ENCODE measurements at regions of chr5 and their contacts with region 1.

Region 1: GRCh38 chr5:32585446-32586275 is at the start of gene SUB1:
- DNase-seq: peak; percentile 91
- ATAC-seq: peak; percentile 89
- H3K4me3 ChIP-seq: peak within 1 kb of the TSS; percentile 87
- H3K27ac ChIP-seq: peak within 1 kb of the TSS; percentile 85
- H3K4me1 ChIP-seq: peaks cover 16% of the 10 kb centered on the region
- H3K27me3 ChIP-seq: no peaks in the 10 kb centered on the region
- CTCF ChIP-seq: no peak
- total RNA-seq, gene SUB1: 185 and 189 TPM in 2 replicates

Region 2: DNA sequence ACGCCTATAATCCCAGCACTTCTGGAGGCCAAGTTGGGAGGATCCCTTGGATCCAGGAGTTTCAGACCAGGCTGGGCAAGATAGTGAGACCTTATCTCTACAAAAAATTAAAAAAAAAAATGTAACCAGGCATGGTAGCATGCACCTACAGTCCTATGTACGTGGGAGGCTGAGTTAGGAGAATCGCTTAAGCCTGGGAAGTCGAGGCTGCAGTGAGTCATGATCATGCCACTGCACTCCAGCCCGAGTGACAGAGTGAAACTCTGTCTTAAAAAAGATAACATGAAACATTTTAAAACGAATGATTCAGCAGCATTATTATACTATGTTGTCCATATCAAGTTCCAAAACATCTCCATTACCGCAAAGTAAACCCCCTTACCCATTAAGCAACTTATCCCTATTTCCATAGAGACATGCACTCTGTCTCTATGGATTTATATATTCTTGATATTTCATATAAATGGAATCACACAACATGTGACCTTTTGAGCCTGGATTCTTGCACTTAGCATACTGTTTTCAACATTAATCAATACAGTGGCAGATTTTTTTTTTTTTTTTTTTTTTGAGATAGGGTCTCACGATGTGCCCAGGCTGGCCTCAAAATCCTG is 216.0 kb before region 1 on chr5:
- CTCF ChIA-PET with region 1: no interaction called
- POLR2A ChIA-PET with region 1: no interaction called
- intact Hi-C with region 1: no loop called
- DNase-seq: no peak
- ATAC-seq: no peak
- H3K4me3 ChIP-seq: no peak overlapping the region
- H3K27ac ChIP-seq: no peak overlapping the region
- H3K4me1 ChIP-seq: no peaks in the 10 kb centered on the region
- H3K27me3 ChIP-seq: no peaks in the 10 kb centered on the region
- CTCF ChIP-seq: no peak

Region 3: DNA sequence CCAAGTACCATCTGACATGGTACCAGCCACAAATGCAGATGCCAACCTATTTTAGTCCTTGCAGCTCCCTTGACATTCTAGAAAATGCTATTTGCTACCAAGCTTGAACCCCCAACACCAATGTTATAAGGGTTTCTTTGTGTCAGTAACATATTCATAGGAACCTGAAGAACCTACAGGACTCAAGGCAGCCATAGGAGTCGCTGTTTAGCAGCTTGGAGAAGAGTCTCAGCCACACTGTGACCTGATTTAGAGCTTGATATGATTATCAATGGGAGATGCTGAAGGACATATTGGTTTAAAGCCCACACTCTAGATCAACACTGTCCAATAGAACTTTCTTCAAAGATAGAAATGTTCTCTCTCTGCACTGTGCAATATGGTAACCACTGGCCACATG is 134.7 kb before region 1 on chr5:
- CTCF ChIA-PET with region 1: no interaction called
- POLR2A ChIA-PET with region 1: no interaction called
- intact Hi-C with region 1: no loop called
- DNase-seq: peak; percentile 15
- ATAC-seq: no peak
- H3K4me3 ChIP-seq: no peak overlapping the region
- H3K27ac ChIP-seq: no peak overlapping the region
- H3K4me1 ChIP-seq: no peaks in the 10 kb centered on the region
- H3K27me3 ChIP-seq: no peaks in the 10 kb centered on the region
- CTCF ChIP-seq: peak; percentile 55

Region 4: DNA sequence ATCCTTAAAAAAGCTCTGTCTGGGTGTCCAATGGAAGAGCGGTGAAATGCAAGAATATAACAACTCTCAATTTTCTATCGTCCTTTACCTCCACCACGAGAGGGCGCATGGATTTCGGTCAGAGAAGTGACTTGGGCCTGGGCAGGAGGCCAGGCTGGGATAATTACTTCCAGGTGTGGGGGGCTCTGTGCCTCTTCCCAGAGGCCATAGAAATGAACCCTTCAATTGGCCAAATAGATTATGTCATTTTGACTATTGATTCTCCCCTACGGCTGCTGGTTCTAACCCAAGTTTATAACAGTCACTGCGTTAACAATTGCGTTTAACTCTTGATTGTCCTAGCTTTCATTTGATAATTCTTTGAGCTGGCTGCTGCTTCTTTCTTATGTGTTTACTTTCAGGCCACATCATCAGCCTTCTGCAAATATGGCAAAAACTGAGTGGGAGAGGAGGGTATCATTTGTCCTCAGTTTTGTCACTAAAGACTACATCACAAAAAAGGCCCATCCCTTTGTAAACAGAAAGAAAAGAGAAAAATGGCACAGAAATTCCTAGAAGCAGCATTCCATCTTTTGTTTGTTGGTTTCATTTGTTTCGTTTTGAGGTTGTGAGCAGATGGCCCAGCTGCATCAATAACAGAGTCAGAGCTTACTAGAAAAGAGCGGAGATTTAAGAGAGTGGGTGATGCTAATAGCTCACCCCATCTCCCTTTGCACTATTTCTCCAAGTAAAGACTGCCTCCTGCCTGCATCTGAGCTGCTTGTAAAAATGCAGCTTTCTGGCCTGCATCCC is 95.7 kb before region 1 on chr5:
- CTCF ChIA-PET with region 1: interaction called, 152 read pairs
- POLR2A ChIA-PET with region 1: interaction called, 23 read pairs
- intact Hi-C with region 1: loop called (anchors 1 kb)
- DNase-seq: peak; percentile 86
- ATAC-seq: peak; percentile 88
- H3K4me3 ChIP-seq: peak overlapping the region; percentile 9; the same call in 1 of the 2 replicates
- H3K27ac ChIP-seq: peak overlapping the region; percentile 53
- H3K4me1 ChIP-seq: peaks cover 14% of the 10 kb centered on the region
- H3K27me3 ChIP-seq: no peaks in the 10 kb centered on the region
- CTCF ChIP-seq: peak; percentile 91

Region 5: GRCh38 chr5:32504989-32505596 is 80.6 kb before region 1 on chr5:
- CTCF ChIA-PET with region 1: interaction called, 6 read pairs
- POLR2A ChIA-PET with region 1: no interaction called
- intact Hi-C with region 1: loop called (anchors 5 kb)
- DNase-seq: no peak
- ATAC-seq: no peak
- H3K4me3 ChIP-seq: no peak overlapping the region
- H3K27ac ChIP-seq: no peak overlapping the region; the same call in 1 of the 2 replicates
- H3K4me1 ChIP-seq: peaks cover 45% of the 10 kb centered on the region
- H3K27me3 ChIP-seq: no peaks in the 10 kb centered on the region
- CTCF ChIP-seq: no peak

Region 6: GRCh38 chr5:32542216-32543059 is 43.2 kb before region 1 on chr5:
- CTCF ChIA-PET with region 1: no interaction called
- POLR2A ChIA-PET with region 1: no interaction called
- intact Hi-C with region 1: no loop called
- DNase-seq: peak; percentile 76
- ATAC-seq: peak; percentile 87
- H3K4me3 ChIP-seq: no peak overlapping the region
- H3K27ac ChIP-seq: peak overlapping the region; percentile 25; the same call in 1 of the 2 replicates
- H3K4me1 ChIP-seq: peaks cover 8% of the 10 kb centered on the region; the same call in 1 of the 2 replicates
- H3K27me3 ChIP-seq: no peaks in the 10 kb centered on the region
- CTCF ChIP-seq: no peak

Region 7: GRCh38 chr5:32613050-32613672 is 27.5 kb after region 1 on chr5:
- CTCF ChIA-PET with region 1: interaction called, 5 read pairs
- POLR2A ChIA-PET with region 1: no interaction called
- intact Hi-C with region 1: loop called (anchors 2 kb)
- DNase-seq: peak; percentile 87
- ATAC-seq: peak; percentile 81
- H3K4me3 ChIP-seq: no peak overlapping the region
- H3K27ac ChIP-seq: no peak overlapping the region
- H3K4me1 ChIP-seq: no peaks in the 10 kb centered on the region
- H3K27me3 ChIP-seq: no peaks in the 10 kb centered on the region
- CTCF ChIP-seq: peak; percentile 92

Region 8: GRCh38 chr5:32642276-32643002 is 56.8 kb after region 1 on chr5:
- CTCF ChIA-PET with region 1: no interaction called
- POLR2A ChIA-PET with region 1: no interaction called
- intact Hi-C with region 1: loop called (anchors 2 kb)
- DNase-seq: peak; percentile 79
- ATAC-seq: peak; percentile 93
- H3K4me3 ChIP-seq: peak overlapping the region; percentile 49
- H3K27ac ChIP-seq: 0 out of 2 replicates have a peak overlapping the region, but pooled peaks have one; percentile 3
- H3K4me1 ChIP-seq: peaks cover 22% of the 10 kb centered on the region
- H3K27me3 ChIP-seq: no peaks in the 10 kb centered on the region
- CTCF ChIP-seq: no peak

Measured in PC-3 (cell line).